Activated CD8-positive, alpha-beta memory T cell treated with anti-CD3 and anti-CD28 coated beads, Interleukin-2, amount 10 ng/mL, durations not matched to agents 7 days and 5 days (primary cell): ENCODE measurements at regions of chr16 and their contacts with region 1.

Region 1: DNA sequence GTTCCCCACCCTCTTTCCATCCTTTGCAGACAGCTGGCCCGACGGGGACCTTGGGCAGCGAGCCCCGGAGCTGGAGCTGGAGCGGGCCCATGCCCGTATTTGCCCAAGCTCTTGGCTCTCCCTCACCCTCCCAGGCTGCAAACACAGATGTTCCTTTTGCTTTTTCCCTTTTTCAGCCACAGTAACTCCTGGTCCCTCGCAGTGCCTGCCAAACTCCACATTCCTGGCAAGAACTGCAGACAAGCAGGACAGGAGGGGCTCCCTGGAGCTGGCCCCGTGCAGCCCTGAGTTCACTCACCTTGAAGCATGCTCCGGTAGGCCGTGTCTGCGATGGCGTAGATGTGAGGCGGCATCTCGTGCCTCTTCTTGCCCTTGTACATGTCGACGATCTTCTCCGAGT is 33.9 kb downstream of the MYH11 start:
- DNase-seq: no peak
- ATAC-seq: no peak
- H3K4me3 Mint-ChIP-seq: no peak overlapping the region
- H3K27ac Mint-ChIP-seq: no peak overlapping the region
- H3K4me1 Mint-ChIP-seq: no peaks in the 10 kb centered on the region
- H3K27me3 Mint-ChIP-seq: peaks cover 15% of the 10 kb centered on the region

Region 2: DNA sequence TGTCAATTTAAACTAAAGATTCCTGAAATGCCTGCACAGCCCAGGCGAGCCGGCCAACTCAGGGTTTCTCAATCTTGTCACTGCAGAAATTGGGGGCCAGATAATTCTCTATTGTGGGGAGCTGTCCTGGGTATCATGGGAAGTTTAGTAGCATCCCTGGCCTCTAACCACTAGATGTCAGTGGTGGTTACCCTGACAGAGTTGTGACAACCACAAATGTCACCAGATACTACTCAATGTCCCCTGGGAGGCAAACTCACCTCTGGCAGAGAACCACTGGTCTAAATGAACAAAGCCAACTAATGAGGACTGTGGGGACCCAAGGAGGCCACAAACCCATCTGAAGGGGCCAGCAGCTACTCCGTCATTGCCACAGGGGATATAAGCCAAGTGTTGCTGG is 57.1 kb before region 1 on chr16:
- CTCF ChIA-PET with region 1: interaction called, 13 read pairs
- DNase-seq: peak; percentile 69
- ATAC-seq: peak; percentile 76
- H3K4me3 Mint-ChIP-seq: no peak overlapping the region
- H3K27ac Mint-ChIP-seq: no peak overlapping the region
- H3K4me1 Mint-ChIP-seq: peaks cover 2% of the 10 kb centered on the region
- H3K27me3 Mint-ChIP-seq: peaks cover 9% of the 10 kb centered on the region

Region 3: GRCh38 chr16:15811481-15812400 is 11.2 kb before region 1 on chr16:
- CTCF ChIA-PET with region 1: interaction called, 22 read pairs
- DNase-seq: no peak
- ATAC-seq: no peak
- H3K4me3 Mint-ChIP-seq: no peak overlapping the region
- H3K27ac Mint-ChIP-seq: no peak overlapping the region
- H3K4me1 Mint-ChIP-seq: no peaks in the 10 kb centered on the region
- H3K27me3 Mint-ChIP-seq: peaks cover 38% of the 10 kb centered on the region